ENCODE measurements at regions of chr3 and their contacts with region 1.

Region 1: DNA sequence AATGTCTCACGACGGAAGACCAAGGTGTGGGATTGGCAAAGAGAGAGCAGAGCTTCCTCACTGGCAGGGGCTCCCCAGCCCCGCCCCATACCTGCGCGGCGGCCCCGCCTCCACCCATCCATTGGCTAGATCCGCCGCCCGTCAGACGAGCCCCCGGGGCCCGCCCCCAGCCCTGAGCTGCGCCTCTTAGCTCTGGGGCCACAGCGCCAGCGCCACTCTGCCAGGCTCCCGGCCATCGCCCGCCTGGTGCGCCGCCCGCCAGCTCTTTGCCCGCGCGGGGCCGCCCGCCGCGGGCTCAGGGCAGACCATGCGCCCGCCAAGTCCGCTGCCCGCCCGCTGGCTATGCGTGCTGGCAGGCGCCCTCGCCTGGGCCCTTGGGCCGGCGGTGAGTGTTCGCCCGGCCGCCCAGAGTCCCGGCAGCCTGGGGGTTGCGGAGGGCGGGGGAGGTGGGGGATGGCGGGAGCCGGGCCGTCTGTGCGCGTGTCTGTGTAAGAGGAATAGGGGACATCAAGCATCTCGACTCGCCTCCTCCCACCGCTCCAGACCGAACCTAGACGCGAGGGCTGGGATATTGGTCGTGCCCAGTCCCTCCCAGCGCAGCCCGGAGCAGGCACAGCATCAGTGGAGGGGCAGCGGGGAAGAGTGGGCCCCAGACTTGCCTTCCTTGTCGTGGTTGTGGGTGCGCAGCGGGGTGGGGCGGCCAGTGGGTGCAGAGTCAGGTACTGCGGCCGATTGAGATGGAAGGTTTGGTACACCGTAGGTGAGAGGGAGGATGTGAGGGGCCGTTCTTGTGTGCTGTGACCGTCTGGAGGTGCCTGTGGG is at the start of gene VIPR1:
- DNase-seq: peak; percentile 82 to 97 (median 93)
- ATAC-seq: peak; percentile 93 to 96 (median 94)
- H3K4me3 ChIP-seq: peak within 1 kb of the TSS; percentile 71
- H3K4me3 Mint-ChIP-seq: peak within 1 kb of the TSS; percentile 92 to 95 (median 93)
- H3K27ac ChIP-seq: peak within 1 kb of the TSS; percentile 38
- H3K27ac Mint-ChIP-seq: peak within 1 kb of the TSS; percentile 89 to 91
- H3K4me1 ChIP-seq: peaks cover 14 to 55% of the 10 kb centered on the region in 2 experiments
- H3K4me1 Mint-ChIP-seq: peaks cover 45 to 66% (median 57%) of the 10 kb centered on the region in 3 donors
- H3K27me3 ChIP-seq: peaks cover 0 to 38% of the 10 kb centered on the region in 2 experiments
- H3K27me3 Mint-ChIP-seq: peaks cover 12 to 32% of the 10 kb centered on the region in 2 donors
- total RNA-seq, gene VIPR1: 68.0 to 92.4 (median 76.1) TPM

Region 2: GRCh38 chr3:42526616-42527367 is 24.2 kb after region 1 on chr3:
- CTCF ChIA-PET with region 1: interaction called, 3 to 15 read pairs
- POLR2A ChIA-PET with region 1: interaction called in 1 of 2 experiments, 4 read pairs
- DNase-seq: peak in 33 of 35 experiments; percentile 14 to 61 (median 38)
- ATAC-seq: peak; percentile 77 to 87 (median 80)
- H3K4me3 ChIP-seq: no peak overlapping the region
- H3K4me3 Mint-ChIP-seq: peak overlapping the region; percentile 1 to 58 (median 41)
- H3K27ac ChIP-seq: peak overlapping the region; percentile 59
- H3K27ac Mint-ChIP-seq: peak overlapping the region; percentile 94 to 97
- H3K4me1 ChIP-seq: peaks cover 51 to 72% of the 10 kb centered on the region in 2 experiments
- H3K4me1 Mint-ChIP-seq: peaks cover 63 to 79% (median 68%) of the 10 kb centered on the region in 3 donors
- H3K27me3 ChIP-seq: no peaks in the 10 kb centered on the region
- H3K27me3 Mint-ChIP-seq: no peaks in the 10 kb centered on the region

Region 3: GRCh38 chr3:42535981-42536790 is 33.5 kb after region 1 on chr3:
- CTCF ChIA-PET with region 1: interaction called, 23 to 25 read pairs
- POLR2A ChIA-PET with region 1: interaction called, 3 to 6 read pairs
- DNase-seq: peak in 25 of 35 experiments; percentile 6 to 65 (median 32)
- ATAC-seq: peak; percentile 49 to 72 (median 52)
- H3K4me3 ChIP-seq: no peak overlapping the region
- H3K4me3 Mint-ChIP-seq: no peak overlapping the region
- H3K27ac ChIP-seq: no peak overlapping the region
- H3K27ac Mint-ChIP-seq: peak overlapping the region; percentile 39 to 69
- H3K4me1 ChIP-seq: peaks cover 11 to 56% of the 10 kb centered on the region in 2 experiments
- H3K4me1 Mint-ChIP-seq: peaks cover 51 to 75% (median 63%) of the 10 kb centered on the region in 3 donors
- H3K27me3 ChIP-seq: no peaks in the 10 kb centered on the region
- H3K27me3 Mint-ChIP-seq: no peaks in the 10 kb centered on the region

Region 4: DNA sequence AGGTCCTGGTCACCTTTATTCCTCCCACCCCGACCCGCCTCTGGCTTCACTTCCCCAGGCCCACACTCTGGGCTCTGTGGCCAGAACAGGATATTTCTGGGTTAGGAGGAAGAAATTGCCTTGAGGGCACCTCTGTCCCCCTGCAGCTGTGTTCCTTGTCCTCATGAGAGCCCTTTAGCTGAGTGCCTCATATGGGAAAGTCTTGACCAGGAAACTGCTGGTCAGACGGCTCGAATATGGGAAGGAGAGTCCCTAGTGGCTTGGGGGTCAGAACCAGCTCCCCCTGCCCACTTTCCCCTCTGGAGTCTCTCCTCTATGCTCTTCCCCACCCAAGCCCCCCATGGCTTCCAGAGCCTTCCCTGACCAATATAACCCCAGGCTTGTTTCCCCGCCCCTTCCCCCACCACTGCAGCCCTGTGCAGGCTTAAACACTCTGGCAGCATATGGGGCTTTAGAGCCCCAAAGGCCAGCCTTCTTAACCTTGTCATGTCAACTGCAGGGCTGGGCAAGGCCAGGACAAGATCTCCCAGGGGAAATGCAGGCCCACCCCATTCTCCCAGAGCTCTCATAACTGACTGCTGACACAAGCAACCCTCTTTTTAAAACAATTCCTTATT is 42.8 kb after region 1 on chr3:
- CTCF ChIA-PET with region 1: interaction called, 9 to 13 read pairs
- POLR2A ChIA-PET with region 1: interaction called in 1 of 2 experiments, 3 read pairs
- DNase-seq: no peak
- ATAC-seq: no peak
- H3K4me3 ChIP-seq: no peak overlapping the region
- H3K4me3 Mint-ChIP-seq: no peak overlapping the region
- H3K27ac ChIP-seq: no peak overlapping the region
- H3K27ac Mint-ChIP-seq: no peak overlapping the region
- H3K4me1 ChIP-seq: peaks cover 0 to 6% of the 10 kb centered on the region in 2 experiments
- H3K4me1 Mint-ChIP-seq: peaks cover 0 to 22% (median 7%) of the 10 kb centered on the region in 3 donors
- H3K27me3 ChIP-seq: no peaks in the 10 kb centered on the region
- H3K27me3 Mint-ChIP-seq: no peaks in the 10 kb centered on the region

Region 5: DNA sequence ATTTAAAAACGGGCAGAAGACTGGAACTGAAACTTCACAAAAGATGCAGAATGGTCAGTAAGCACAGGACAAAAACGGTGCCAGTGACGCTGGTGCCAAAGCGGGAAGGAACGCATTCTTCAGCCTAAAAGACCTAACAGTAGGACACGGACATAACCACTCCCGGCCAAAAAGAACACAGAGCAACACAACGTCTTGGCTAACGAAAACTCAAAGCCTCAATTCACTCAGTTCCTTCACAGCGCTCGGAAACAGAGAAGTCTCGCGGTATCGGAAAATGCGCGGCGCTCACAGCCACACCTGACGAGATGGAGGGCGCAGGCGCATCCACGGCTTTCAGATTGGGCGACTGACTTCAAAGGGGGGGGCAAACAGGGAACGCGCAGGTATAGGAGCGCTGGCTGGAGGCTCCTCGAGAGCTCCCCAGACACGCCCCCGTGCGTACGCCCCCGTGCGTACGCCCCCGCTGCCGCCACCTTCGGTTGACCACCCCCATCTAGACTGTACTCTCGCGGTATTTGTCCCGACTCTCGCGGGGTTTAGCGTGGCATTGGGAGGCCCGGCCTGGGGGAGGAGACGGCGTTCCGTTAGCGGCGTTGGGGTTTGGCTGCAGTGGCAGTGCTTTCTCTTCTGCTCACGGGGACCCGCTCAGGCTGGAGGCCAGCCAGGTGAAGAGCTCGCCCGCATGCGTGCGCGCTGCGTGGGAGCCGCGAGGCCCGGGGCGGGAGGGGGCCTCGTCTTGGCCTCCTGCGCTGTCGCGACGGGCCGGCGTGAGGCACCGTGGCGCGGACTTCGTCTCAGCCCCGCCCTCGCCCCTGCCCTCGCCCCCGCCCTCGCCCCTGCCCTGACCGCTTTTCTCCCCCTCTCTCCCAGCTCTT is 97.7 kb after region 1 on chr3 and contains the start of gene NKTR:
- CTCF ChIA-PET with region 1: interaction called in 1 of 2 experiments, 12 read pairs
- POLR2A ChIA-PET with region 1: no interaction called
- DNase-seq: peak; percentile 98 to 100 (median 99)
- ATAC-seq: peak; percentile 90 to 98 (median 92)
- H3K4me3 ChIP-seq: peak within 1 kb of the TSS; percentile 86 to 95
- H3K4me3 Mint-ChIP-seq: peak within 1 kb of the TSS; percentile 93 to 95 (median 94)
- H3K27ac ChIP-seq: peak within 1 kb of the TSS; percentile 86
- H3K27ac Mint-ChIP-seq: peak within 1 kb of the TSS; percentile 96 to 99
- H3K4me1 ChIP-seq: peaks cover 13 to 19% of the 10 kb centered on the region in 2 experiments
- H3K4me1 Mint-ChIP-seq: peaks cover 37 to 45% (median 43%) of the 10 kb centered on the region in 3 donors
- H3K27me3 ChIP-seq: no peaks in the 10 kb centered on the region
- H3K27me3 Mint-ChIP-seq: no peaks in the 10 kb centered on the region
- total RNA-seq, gene NKTR: 185 to 252 (median 209) TPM

Region 6: GRCh38 chr3:43126536-43126935 is 623.9 kb after region 1 on chr3:
- CTCF ChIA-PET with region 1: no interaction called
- POLR2A ChIA-PET with region 1: no interaction called
- DNase-seq: no peak
- ATAC-seq: no peak
- H3K4me3 ChIP-seq: no peak overlapping the region
- H3K4me3 Mint-ChIP-seq: no peak overlapping the region
- H3K27ac ChIP-seq: no peak overlapping the region
- H3K27ac Mint-ChIP-seq: no peak overlapping the region
- H3K4me1 ChIP-seq: no peaks in the 10 kb centered on the region
- H3K4me1 Mint-ChIP-seq: no peaks in the 10 kb centered on the region
- H3K27me3 ChIP-seq: peaks cover 0 to 3% of the 10 kb centered on the region in 2 experiments
- H3K27me3 Mint-ChIP-seq: peaks cover 4 to 6% of the 10 kb centered on the region in 2 donors

Measured in T-cell (primary cell).